ENCODE measurements at regions of chr6 and their contacts with region 1.

Region 1: GRCh38 chr6:156776840-156777576 is at the start of gene ARID1B:
- DNase-seq: peak; percentile 33 to 75
- ATAC-seq: peak; percentile 62 to 71
- H3K4me3 ChIP-seq: peak within 1 kb of the TSS; percentile 87
- H3K27ac ChIP-seq: peak within 1 kb of the TSS; percentile 98 to 100
- H3K4me1 ChIP-seq: peaks cover 32% of the 10 kb centered on the region
- CTCF ChIP-seq: no peak
- EP300 ChIP-seq: no peak
- POLR2A ChIP-seq: peak; percentile 36
- RAD21 ChIP-seq: no peak; a peak in 1 of 5 replicates
- polyA plus RNA-seq, gene ARID1B: 16.3 and 19.2 TPM in 2 replicates

Region 2: DNA sequence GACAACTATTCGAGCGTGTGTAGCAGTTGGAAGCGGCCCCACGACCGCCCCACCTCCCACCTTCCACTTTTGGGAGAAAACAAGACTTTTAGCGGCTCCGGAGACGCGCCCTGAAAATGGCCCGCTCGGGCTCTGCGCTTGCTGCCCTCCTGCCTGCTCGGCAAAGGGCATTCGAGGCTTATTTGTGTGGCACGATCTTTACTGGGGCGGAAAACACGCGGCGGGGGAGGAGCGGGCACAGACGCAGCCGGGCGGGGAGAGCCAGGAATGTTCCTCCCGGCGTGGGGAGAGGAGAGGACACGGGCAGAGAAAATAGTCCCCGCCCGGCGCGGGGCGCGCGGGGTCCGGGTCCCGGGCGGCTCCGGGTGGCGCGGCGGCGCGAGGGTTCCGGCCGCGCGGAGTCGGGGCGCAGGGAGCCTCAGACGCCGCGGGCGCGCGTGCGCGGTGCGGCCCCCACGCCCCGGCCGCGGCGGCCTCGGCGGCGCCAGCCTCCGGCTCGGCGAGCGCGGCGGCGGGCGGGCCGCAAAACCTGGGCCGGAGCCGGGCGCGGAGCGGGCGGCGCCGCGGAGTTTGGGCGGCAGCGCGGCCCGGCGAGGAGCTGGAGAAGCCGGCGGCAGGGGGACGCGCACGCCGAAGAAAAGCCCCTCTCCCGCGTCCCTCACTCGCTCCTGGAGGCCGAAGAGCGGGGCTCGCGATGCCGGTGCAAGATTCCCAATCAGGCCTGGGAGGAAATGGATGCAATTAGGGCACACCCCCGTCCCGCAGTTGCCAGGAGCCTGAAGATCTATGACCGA is 89.8 kb before region 1 on chr6:
- CTCF ChIA-PET with region 1: no interaction called
- POLR2A ChIA-PET with region 1: interaction called, 16 read pairs
- DNase-seq: peak; percentile 56 to 83
- ATAC-seq: peak; percentile 86 to 92
- H3K4me3 ChIP-seq: peak overlapping the region; percentile 92
- H3K27ac ChIP-seq: peak overlapping the region; percentile 98 to 100
- H3K4me1 ChIP-seq: peaks cover 10% of the 10 kb centered on the region
- CTCF ChIP-seq: no peak
- EP300 ChIP-seq: no peak
- POLR2A ChIP-seq: peak; percentile 48
- RAD21 ChIP-seq: peak in 1 of 2 experiments; percentile 11; a peak in 1 of 5 replicates

Region 3: DNA sequence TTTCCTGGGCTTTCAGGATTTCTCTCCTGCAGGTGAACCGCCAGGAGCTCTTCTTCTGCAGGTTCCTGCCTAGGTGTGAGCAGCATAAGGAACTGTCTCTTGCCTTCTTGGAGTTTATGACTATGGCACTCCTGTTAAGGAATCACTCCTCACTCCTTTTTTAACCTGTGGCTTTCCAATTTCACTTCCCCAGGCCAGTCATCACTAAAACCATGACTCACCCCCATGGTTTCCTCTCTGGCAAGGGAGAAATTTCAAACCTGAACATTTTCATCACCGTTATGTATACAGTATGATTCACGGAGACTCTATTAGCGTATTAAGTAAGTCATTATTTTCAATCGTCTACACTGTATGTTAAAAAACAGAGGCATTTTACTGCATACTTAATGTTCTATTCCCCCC is 78.0 kb before region 1 on chr6:
- CTCF ChIA-PET with region 1: no interaction called
- POLR2A ChIA-PET with region 1: no interaction called
- DNase-seq: peak; percentile 7 to 31
- ATAC-seq: peak; percentile 76 to 77
- H3K4me3 ChIP-seq: no peak overlapping the region
- H3K27ac ChIP-seq: peak overlapping the region in 1 of 2 experiments; percentile 54; a peak in 3 of 6 replicates
- H3K4me1 ChIP-seq: peaks cover 14% of the 10 kb centered on the region
- CTCF ChIP-seq: no peak
- EP300 ChIP-seq: no peak
- POLR2A ChIP-seq: no peak
- RAD21 ChIP-seq: no peak

Region 4: GRCh38 chr6:156719720-156720563 is 57.1 kb before region 1 on chr6:
- CTCF ChIA-PET with region 1: no interaction called
- POLR2A ChIA-PET with region 1: interaction called, 17 read pairs
- DNase-seq: peak; percentile 43 to 95
- ATAC-seq: peak; percentile 93 to 95
- H3K4me3 ChIP-seq: peak overlapping the region; percentile 30
- H3K27ac ChIP-seq: peak overlapping the region; percentile 89 to 95
- H3K4me1 ChIP-seq: peaks cover 33% of the 10 kb centered on the region
- CTCF ChIP-seq: no peak
- EP300 ChIP-seq: peak; percentile 41 to 79; a peak in 3 of 5 replicates
- POLR2A ChIP-seq: 0 out of 2 replicates have a peak, but pooled peaks have one; percentile 34
- RAD21 ChIP-seq: peak; percentile 7 to 38; a peak in 3 of 5 replicates